ENCODE measurements at regions of chr16 and their contacts with region 1.

Region 1: GRCh38 chr16:29973384-29974246 is at the start of gene TAOK2:
- DNase-seq: peak; percentile 99
- H3K4me3 ChIP-seq: peak within 1 kb of the TSS; percentile 92
- H3K27ac ChIP-seq: peak within 1 kb of the TSS; percentile 31
- H3K27me3 ChIP-seq: no peaks in the 10 kb centered on the region
- CTCF ChIP-seq: no peak
- polyA plus RNA-seq, gene TAOK2: 16.9 and 18.2 TPM in 2 replicates

Region 2: GRCh38 chr16:29794231-29794710 is 179.3 kb before region 1 on chr16:
- CTCF ChIA-PET with region 1: no interaction called
- POLR2A ChIA-PET with region 1: no interaction called
- DNase-seq: no peak
- H3K4me3 ChIP-seq: no peak overlapping the region
- H3K27ac ChIP-seq: no peak overlapping the region
- H3K27me3 ChIP-seq: no peaks in the 10 kb centered on the region
- CTCF ChIP-seq: no peak

Region 3: GRCh38 chr16:29926005-29926710 is 47.5 kb before region 1 on chr16 and contains the start of gene KCTD13:
- CTCF ChIA-PET with region 1: no interaction called
- POLR2A ChIA-PET with region 1: interaction called, 21 read pairs
- DNase-seq: peak; percentile 56
- H3K4me3 ChIP-seq: peak within 1 kb of the TSS; percentile 96
- H3K27ac ChIP-seq: peak within 1 kb of the TSS; percentile 73
- H3K27me3 ChIP-seq: no peaks in the 10 kb centered on the region
- CTCF ChIP-seq: no peak
- polyA plus RNA-seq, gene KCTD13: 7.4 and 8.8 TPM in 2 replicates

Region 4: DNA sequence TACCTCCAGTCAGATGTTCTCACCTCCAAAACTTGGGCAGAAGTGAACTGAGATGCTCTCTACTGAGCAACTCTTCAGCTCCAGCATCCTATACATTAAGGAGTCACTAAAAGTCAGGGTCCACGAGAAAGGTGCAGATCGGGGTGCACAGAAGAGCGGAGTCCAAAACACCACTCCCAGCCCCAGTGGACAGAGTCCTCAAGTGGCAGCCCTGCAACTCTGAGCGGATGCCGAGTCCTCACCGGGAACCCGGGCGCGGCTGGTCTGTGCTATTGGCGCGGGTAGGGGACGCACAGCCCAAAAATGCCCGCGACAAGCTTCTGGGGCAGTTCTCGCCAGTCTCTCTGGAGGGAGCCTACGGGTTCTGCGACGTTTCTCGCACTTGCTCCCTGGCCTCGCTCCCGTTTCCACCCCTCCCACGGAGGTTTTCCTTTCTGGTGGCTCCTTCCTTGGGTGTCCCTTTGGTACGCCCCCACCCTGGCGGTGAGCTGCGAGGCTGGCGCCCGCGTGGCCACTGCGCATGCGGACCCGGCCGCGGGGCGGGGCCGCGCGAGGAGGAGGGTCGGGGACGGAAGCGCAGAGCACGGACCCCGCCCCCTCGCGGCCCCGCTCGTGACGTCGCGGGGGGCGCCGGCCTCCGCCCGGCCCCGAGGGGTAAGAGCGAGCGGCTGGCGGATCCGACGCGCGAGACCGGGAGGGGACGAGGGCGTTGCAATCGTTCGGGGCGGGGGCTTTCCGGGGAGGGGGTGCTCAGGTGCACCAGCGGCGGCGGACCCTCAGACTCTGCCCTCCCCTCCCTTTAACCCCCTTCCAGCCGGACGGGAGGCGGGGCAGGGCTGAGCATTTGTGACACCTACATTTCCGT is 11.9 kb before region 1 on chr16 and contains the start of gene TMEM219:
- CTCF ChIA-PET with region 1: interaction called, 13 read pairs
- POLR2A ChIA-PET with region 1: interaction called, 17 read pairs
- DNase-seq: peak; percentile 54
- H3K4me3 ChIP-seq: peak within 1 kb of the TSS; percentile 77
- H3K27ac ChIP-seq: peak within 1 kb of the TSS; percentile 57
- H3K27me3 ChIP-seq: no peaks in the 10 kb centered on the region
- CTCF ChIP-seq: peak; percentile 48
- polyA plus RNA-seq, gene TMEM219: 88.6 and 107 TPM in 2 replicates

Region 5: GRCh38 chr16:29987371-29988085 is 13.9 kb after region 1 on chr16:
- CTCF ChIA-PET with region 1: no interaction called
- POLR2A ChIA-PET with region 1: no interaction called
- DNase-seq: no peak
- H3K4me3 ChIP-seq: no peak overlapping the region
- H3K27ac ChIP-seq: no peak overlapping the region
- H3K27me3 ChIP-seq: no peaks in the 10 kb centered on the region
- CTCF ChIP-seq: no peak